Activated B cell treated with CpG ODN at 0.5 μM for 24 hours (primary cell): ENCODE measurements at regions of chr4 and their contacts with region 1.

Region 1: DNA sequence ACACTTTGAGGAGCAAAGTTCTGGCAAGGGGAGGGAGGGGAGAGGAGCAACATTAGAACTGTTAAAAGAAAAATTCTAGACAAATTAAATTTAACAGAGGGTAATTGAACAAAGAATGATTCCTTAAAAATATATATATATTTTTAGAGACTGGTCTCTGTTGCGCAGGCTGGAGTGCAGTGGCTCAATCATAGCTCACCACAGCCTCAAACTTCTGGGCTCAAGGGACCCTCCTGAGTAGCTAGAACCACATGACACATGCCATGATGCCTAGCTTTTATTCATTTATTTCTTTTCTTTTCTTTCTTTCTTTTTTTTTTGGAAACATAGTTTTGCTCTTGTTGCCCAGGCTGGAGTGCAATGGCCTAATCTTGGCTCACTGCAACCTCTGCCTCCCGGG is 19.1 kb upstream of the SPINK2 start:
- DNase-seq: no peak
- ATAC-seq: no peak
- H3K4me3 Mint-ChIP-seq: no peak overlapping the region
- H3K27ac Mint-ChIP-seq: no peak overlapping the region
- H3K4me1 Mint-ChIP-seq: peaks cover 4% of the 10 kb centered on the region
- H3K27me3 Mint-ChIP-seq: no peaks in the 10 kb centered on the region
- CTCF ChIP-seq: no peak

Region 2: DNA sequence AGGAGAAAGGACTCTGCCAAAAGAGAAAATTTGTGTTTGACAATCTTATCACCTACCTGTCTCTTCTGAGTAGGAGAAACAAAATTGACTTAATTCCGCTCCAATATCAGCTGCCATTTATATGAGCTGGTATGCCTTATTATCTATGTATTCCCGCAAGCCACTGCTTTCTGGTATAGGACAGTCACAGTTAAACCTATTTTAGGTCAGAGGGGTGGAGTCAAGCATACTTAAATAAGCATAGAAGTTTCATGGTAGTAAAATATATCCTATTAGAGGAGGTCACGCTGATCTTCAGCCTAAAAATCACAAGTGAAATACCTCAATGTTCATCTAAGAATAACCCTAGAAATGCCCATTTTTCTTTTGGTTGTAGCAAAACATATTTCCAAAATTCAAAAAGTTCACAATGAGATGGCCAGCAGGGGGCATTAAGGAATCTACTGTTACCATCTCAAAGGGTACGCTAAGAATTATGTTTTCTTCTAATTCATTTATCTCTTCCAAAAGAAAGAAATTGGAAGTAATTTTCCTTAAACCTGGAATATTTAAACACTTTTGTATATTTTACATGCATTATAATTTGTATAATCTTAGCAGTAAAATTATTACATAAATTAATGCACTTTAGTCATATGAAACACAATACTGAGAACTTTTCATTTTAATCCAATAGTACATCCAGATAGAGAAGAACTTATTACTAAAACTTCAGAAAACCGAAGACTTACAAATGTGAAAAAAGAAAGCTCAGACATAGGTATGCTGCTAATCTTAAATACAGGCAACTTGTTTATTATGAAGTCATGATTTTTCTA is 415.7 kb before region 1 on chr4:
- CTCF ChIA-PET with region 1: interaction called, 87 read pairs
- POLR2A ChIA-PET with region 1: no interaction called
- intact Hi-C with region 1: loop called (anchors 1 kb)
- DNase-seq: no peak
- ATAC-seq: no peak
- H3K4me3 Mint-ChIP-seq: no peak overlapping the region
- H3K27ac Mint-ChIP-seq: no peak overlapping the region
- H3K4me1 Mint-ChIP-seq: peaks cover 12% of the 10 kb centered on the region
- H3K27me3 Mint-ChIP-seq: no peaks in the 10 kb centered on the region
- CTCF ChIP-seq: peak; percentile 75

Region 3: DNA sequence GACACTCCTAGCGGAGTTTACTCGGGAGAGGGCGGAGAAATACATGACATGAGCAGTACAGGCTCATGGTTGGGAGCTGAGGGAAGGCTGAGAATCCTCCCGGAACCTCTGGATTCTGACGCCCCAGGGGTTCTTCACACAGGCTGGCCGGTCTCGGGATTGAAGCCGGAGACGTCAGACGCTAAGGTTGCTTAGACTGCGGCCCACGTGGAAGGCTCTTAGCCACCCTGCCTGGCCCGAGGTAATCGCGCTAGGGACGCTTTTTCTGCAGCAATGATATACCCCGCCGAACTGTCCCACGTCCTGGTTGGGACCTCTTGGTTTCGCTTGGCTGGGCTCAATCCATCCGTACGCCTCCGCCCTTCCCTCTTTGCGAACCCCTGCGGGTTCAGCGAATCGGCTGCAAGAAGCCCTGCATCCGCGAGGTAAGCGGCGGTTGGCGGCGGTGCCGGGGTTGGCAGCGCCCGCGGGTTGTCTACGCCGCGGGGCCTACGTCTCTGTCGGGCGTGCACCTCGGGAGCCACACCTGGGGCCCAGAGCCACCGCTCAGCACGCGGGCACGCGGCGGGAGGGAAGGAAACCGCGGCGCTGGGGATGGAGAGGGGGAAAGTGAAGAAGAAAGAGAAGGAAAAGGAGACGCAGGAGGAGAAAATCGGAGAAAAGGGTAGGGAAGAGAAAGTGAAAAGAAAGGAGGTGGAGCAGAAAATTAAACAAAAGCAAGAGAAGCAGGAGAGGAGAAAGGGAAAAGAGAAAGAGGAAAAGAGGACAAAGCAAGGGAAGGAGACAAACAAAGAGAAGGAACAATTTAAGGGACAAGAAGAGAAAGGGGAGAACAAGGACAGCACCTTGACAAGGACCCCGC is 335.1 kb before region 1 on chr4 and contains the start of gene ARL9:
- CTCF ChIA-PET with region 1: interaction called, 3 read pairs
- POLR2A ChIA-PET with region 1: no interaction called
- intact Hi-C with region 1: loop called (anchors 1 kb)
- DNase-seq: peak; percentile 52
- ATAC-seq: peak; percentile 86
- H3K4me3 Mint-ChIP-seq: peak within 1 kb of the TSS; percentile 88
- H3K27ac Mint-ChIP-seq: peak within 1 kb of the TSS; percentile 50
- H3K4me1 Mint-ChIP-seq: peaks cover 19% of the 10 kb centered on the region
- H3K27me3 Mint-ChIP-seq: peaks cover 2% of the 10 kb centered on the region
- CTCF ChIP-seq: no peak
- total RNA-seq, gene ARL9: 0.22 TPM in 1 of 2 replicates, not detected in the other

Region 4: GRCh38 chr4:56544573-56545131 is 295.9 kb before region 1 on chr4:
- CTCF ChIA-PET with region 1: interaction called, 7 read pairs
- POLR2A ChIA-PET with region 1: no interaction called
- intact Hi-C with region 1: loop called (anchors 1 kb)
- DNase-seq: peak; percentile 89
- ATAC-seq: peak; percentile 99
- H3K4me3 Mint-ChIP-seq: peak overlapping the region; percentile 71
- H3K27ac Mint-ChIP-seq: no peak overlapping the region
- H3K4me1 Mint-ChIP-seq: peaks cover 10% of the 10 kb centered on the region
- H3K27me3 Mint-ChIP-seq: peaks cover 14% of the 10 kb centered on the region
- CTCF ChIP-seq: peak; percentile 93

Region 5: DNA sequence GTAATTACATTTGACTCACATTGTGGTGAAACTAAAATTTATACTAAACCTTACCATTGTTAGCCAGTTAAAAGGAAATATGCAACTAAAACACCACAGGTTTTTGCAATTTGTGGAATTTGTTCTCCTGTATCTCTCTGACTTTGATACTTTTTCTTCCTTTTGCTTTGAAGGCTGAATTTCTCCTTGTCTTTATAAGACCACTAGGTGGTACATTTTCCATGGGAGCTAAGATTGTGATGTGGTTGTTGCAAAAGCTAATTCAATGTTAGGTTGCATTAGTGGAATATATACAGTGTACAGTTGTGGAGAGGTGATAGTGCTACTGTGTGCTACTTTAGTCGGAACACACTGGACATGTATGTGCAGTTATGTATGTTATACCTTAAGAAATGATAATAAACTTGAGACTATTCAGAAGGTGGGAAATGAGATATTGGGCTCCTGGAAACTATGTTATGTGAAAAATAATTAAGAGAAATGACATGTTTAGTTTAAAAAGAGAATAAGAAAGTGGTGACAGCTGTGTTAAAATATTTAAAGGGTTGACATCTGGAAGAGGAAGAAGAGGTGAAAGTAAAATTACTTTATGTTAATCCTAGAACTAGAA is 264.6 kb before region 1 on chr4:
- CTCF ChIA-PET with region 1: interaction called, 16 read pairs
- POLR2A ChIA-PET with region 1: no interaction called
- intact Hi-C with region 1: loop called (anchors 1 kb)
- DNase-seq: no peak
- ATAC-seq: no peak
- H3K4me3 Mint-ChIP-seq: no peak overlapping the region
- H3K27ac Mint-ChIP-seq: no peak overlapping the region
- H3K4me1 Mint-ChIP-seq: peaks cover 2% of the 10 kb centered on the region
- H3K27me3 Mint-ChIP-seq: peaks cover 5% of the 10 kb centered on the region
- CTCF ChIP-seq: no peak

Region 6: GRCh38 chr4:56821381-56822243 is 18.9 kb before region 1 on chr4 and contains the start of gene SPINK2:
- CTCF ChIA-PET with region 1: interaction called, 11 read pairs
- POLR2A ChIA-PET with region 1: interaction called, 4 read pairs
- intact Hi-C with region 1: loop called (anchors 2 kb)
- DNase-seq: peak; percentile 58
- ATAC-seq: peak; percentile 87
- H3K4me3 Mint-ChIP-seq: peak within 1 kb of the TSS; percentile 81
- H3K27ac Mint-ChIP-seq: peak within 1 kb of the TSS; percentile 24
- H3K4me1 Mint-ChIP-seq: peaks cover 31% of the 10 kb centered on the region
- H3K27me3 Mint-ChIP-seq: no peaks in the 10 kb centered on the region
- CTCF ChIP-seq: no peak
- total RNA-seq, gene SPINK2: 1.2 TPM in 1 of 2 replicates, not detected in the other